ENCODE measurements at regions of chr1 and their contacts with region 1.

Region 1: DNA sequence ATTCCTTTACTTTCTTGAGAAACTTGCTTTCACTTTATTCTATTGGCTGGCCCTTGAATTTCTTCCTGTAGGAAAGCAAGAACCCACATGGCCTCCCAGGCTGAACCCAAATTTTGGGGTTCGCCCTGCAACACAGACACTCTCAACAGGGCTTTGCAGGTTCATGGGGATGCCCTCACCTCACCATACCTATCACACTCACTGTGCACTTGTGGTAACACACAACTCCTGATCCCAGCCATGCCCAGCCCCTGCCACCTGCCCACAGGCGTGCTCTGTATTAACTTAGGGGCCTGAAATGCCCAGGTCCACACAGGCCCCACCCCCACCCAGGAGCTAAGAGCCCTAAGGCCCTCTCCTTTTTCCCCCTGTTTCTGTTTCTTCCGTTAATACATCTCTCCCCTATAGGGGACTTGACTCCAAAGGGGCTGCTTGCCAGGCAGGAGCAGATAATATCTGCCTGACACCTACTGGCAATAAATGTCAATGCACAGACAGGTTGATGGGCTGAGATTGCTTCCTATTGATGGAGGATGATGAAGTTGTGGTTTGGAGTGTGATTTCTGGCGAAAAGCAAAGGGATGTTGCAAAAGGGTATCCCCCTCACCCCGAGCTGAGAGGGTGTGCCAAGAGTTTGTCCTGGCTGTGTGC is 171.5 kb downstream of the AJAP1 start:
- DNase-seq: no peak
- ATAC-seq: no peak
- H3K4me3 ChIP-seq: no peak overlapping the region
- H3K27ac ChIP-seq: no peak overlapping the region
- H3K4me1 ChIP-seq: no peaks in the 10 kb centered on the region
- H3K27me3 ChIP-seq: no peaks in the 10 kb centered on the region
- CTCF ChIP-seq: peak; percentile 43 to 63 (median 58); a peak in 5 of 6 replicates
- EP300 ChIP-seq: no peak
- POLR2A ChIP-seq: no peak
- RAD21 ChIP-seq: peak; percentile 82

Region 2: DNA sequence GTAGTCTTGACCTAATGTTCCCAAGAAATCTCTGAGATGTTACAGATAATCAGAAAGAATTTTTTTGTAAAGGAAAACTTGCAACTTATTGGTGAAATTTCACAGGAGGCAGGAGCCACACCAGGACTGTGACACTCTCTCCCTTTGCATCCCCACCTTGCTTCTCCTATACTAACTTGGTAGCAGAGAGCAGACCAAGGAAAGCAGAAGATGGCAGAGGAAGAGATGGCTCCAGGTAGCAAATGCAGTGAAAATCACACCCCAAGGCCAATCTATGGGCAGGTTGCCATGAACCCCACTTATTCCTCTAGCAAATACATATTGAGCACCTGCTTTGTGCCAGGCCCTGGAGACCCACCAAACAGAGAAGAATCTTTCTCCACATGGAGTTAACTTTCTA is 622.4 kb before region 1 on chr1:
- CTCF ChIA-PET with region 1: no interaction called
- POLR2A ChIA-PET with region 1: no interaction called
- RAD21 ChIA-PET with region 1: no interaction called
- SMC1A ChIA-PET with region 1: no interaction called
- in situ Hi-C with region 1: no loop called
- intact Hi-C with region 1: no loop called
- DNase-seq: no peak
- ATAC-seq: no peak
- H3K4me3 ChIP-seq: no peak overlapping the region
- H3K27ac ChIP-seq: no peak overlapping the region
- H3K4me1 ChIP-seq: no peaks in the 10 kb centered on the region
- H3K27me3 ChIP-seq: no peaks in the 10 kb centered on the region
- CTCF ChIP-seq: no peak
- EP300 ChIP-seq: no peak
- POLR2A ChIP-seq: no peak
- RAD21 ChIP-seq: no peak

Region 3: GRCh38 chr1:4652631-4653327 is 173.1 kb before region 1 on chr1:
- CTCF ChIA-PET with region 1: interaction called, 10 read pairs
- POLR2A ChIA-PET with region 1: no interaction called
- RAD21 ChIA-PET with region 1: interaction called, 3 read pairs
- SMC1A ChIA-PET with region 1: interaction called, 4 read pairs
- in situ Hi-C with region 1: loop called (anchors 10 kb)
- intact Hi-C with region 1: loop called (anchors 2 kb)
- DNase-seq: no peak
- ATAC-seq: peak; percentile 86
- H3K4me3 ChIP-seq: no peak overlapping the region
- H3K27ac ChIP-seq: no peak overlapping the region
- H3K4me1 ChIP-seq: no peaks in the 10 kb centered on the region
- H3K27me3 ChIP-seq: peaks cover 0 to 6% of the 10 kb centered on the region in 2 experiments; a peak in 2 of 4 replicates
- CTCF ChIP-seq: peak; percentile 75 to 91 (median 83)
- EP300 ChIP-seq: no peak
- POLR2A ChIP-seq: no peak
- RAD21 ChIP-seq: peak; percentile 47

Region 4: GRCh38 chr1:4778056-4778455 is 47.9 kb before region 1 on chr1:
- CTCF ChIA-PET with region 1: interaction called, 10 read pairs
- POLR2A ChIA-PET with region 1: no interaction called
- RAD21 ChIA-PET with region 1: interaction called, 6 read pairs
- SMC1A ChIA-PET with region 1: interaction called, 3 read pairs
- in situ Hi-C with region 1: no loop called
- intact Hi-C with region 1: no loop called
- DNase-seq: no peak
- ATAC-seq: no peak
- H3K4me3 ChIP-seq: no peak overlapping the region
- H3K27ac ChIP-seq: no peak overlapping the region
- H3K4me1 ChIP-seq: no peaks in the 10 kb centered on the region
- H3K27me3 ChIP-seq: no peaks in the 10 kb centered on the region
- CTCF ChIP-seq: no peak; a peak in 1 of 6 replicates
- EP300 ChIP-seq: no peak
- POLR2A ChIP-seq: no peak
- RAD21 ChIP-seq: peak; percentile 42

Region 5: GRCh38 chr1:4963251-4963650 is 137.3 kb after region 1 on chr1:
- CTCF ChIA-PET with region 1: no interaction called
- POLR2A ChIA-PET with region 1: no interaction called
- RAD21 ChIA-PET with region 1: no interaction called
- SMC1A ChIA-PET with region 1: no interaction called
- in situ Hi-C with region 1: no loop called
- intact Hi-C with region 1: no loop called
- DNase-seq: no peak
- ATAC-seq: no peak
- H3K4me3 ChIP-seq: no peak overlapping the region
- H3K27ac ChIP-seq: no peak overlapping the region
- H3K4me1 ChIP-seq: no peaks in the 10 kb centered on the region
- H3K27me3 ChIP-seq: no peaks in the 10 kb centered on the region
- CTCF ChIP-seq: no peak
- EP300 ChIP-seq: no peak
- POLR2A ChIP-seq: no peak
- RAD21 ChIP-seq: no peak